Spleen (tissue), 13 donors: ENCODE measurements at regions of chr7 and their contacts with region 1.

Region 1: GRCh38 chr7:76314042-76314721 is 11.7 kb downstream of the HSPB1 start:
- DNase-seq: peak; percentile 98
- H3K4me3 ChIP-seq: no peak overlapping the region
- H3K27ac ChIP-seq: no peak overlapping the region
- H3K4me1 ChIP-seq: peaks cover 3 to 40% (median 15%) of the 10 kb centered on the region in 6 donors
- H3K27me3 ChIP-seq: no peaks in the 10 kb centered on the region
- CTCF ChIP-seq: peak; percentile 99 to 100 (median 99)
- POLR2A ChIP-seq: no peak

Region 2: GRCh38 chr7:76122516-76123239 is 191.5 kb before region 1 on chr7:
- intact Hi-C with region 1: no loop called
- DNase-seq: no peak
- H3K4me3 ChIP-seq: no peak overlapping the region
- H3K27ac ChIP-seq: no peak overlapping the region
- H3K4me1 ChIP-seq: no peaks in the 10 kb centered on the region
- H3K27me3 ChIP-seq: no peaks in the 10 kb centered on the region
- CTCF ChIP-seq: no peak
- POLR2A ChIP-seq: no peak

Region 3: DNA sequence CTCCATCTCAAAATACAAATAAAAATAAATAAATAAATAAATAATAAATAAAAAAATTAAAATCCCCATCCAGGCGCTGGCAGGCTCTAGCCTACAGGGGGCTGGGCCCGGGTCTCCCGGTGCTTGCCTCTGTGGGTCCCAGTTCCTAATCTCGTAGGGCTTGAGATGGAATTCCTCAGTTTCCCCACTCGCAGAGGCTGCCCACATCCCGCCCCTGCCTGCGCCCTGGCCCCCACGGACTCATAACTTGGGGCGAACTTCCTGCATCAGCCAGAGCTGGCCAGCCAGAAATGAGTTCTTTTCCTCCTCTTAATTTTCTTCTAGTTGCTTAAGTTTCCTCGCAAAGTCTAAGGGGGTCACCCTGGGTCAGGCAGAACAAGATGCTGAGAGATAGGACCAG is 134.5 kb before region 1 on chr7:
- intact Hi-C with region 1: loop called (anchors 2 kb)
- DNase-seq: no peak
- H3K4me3 ChIP-seq: no peak overlapping the region
- H3K27ac ChIP-seq: no peak overlapping the region
- H3K4me1 ChIP-seq: peaks cover 0 to 12% (median 8%) of the 10 kb centered on the region in 6 donors
- H3K27me3 ChIP-seq: no peaks in the 10 kb centered on the region
- CTCF ChIP-seq: no peak
- POLR2A ChIP-seq: no peak

Region 4: DNA sequence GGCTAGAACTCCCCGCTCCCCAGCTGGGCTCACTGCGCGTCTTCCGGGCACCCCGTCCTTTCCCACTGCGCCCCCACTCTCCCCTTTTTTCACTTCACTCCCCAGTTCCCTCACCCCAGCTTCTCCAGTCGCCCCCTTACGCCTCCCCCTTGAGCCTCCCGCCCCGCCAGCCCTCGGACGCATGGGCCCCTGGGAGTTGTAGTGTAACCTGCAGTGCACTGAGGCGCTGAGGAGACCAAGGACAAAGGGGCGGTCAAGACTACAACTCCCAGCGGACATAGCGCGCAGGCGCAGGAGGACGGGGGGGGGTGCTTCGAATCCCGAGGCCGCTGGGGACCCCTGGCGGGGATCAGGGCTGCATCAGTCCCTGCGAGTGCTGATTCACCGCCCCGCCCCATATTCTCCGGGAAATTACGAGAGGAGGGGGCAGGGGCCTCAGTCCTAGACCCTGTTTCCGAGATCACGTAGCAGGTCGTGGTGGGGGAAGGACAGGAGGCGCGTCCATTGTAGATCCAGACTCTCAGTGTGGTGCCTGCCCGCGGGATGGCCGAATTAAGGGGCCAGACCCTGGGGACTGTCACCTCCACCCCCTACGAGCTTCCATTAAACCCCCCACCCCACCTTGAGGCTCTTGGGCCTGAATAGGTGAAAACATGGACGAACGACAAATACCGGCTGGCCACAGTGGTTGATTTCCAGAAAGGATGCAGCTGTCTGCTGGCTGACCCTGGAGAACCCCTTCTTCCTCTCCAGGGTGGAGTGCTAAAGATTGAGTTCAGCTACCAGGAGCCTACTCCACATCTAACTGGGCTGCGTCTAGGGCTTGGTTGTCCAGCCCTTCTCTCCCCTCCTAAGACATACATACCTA is 45.2 kb after region 1 on chr7:
- intact Hi-C with region 1: loop called (anchors 5 kb)
- DNase-seq: peak; percentile 100
- H3K4me3 ChIP-seq: peak overlapping the region; percentile 90 to 100 (median 99)
- H3K27ac ChIP-seq: peak overlapping the region; percentile 93 to 99 (median 98)
- H3K4me1 ChIP-seq: peaks cover 21 to 62% (median 52%) of the 10 kb centered on the region in 6 donors
- H3K27me3 ChIP-seq: no peaks in the 10 kb centered on the region
- CTCF ChIP-seq: peak; percentile 79 to 95 (median 87)
- POLR2A ChIP-seq: peak in 1 of 3 donors; percentile 48